ENCODE measurements at regions of chr4 and their contacts with region 1.

Region 1: DNA sequence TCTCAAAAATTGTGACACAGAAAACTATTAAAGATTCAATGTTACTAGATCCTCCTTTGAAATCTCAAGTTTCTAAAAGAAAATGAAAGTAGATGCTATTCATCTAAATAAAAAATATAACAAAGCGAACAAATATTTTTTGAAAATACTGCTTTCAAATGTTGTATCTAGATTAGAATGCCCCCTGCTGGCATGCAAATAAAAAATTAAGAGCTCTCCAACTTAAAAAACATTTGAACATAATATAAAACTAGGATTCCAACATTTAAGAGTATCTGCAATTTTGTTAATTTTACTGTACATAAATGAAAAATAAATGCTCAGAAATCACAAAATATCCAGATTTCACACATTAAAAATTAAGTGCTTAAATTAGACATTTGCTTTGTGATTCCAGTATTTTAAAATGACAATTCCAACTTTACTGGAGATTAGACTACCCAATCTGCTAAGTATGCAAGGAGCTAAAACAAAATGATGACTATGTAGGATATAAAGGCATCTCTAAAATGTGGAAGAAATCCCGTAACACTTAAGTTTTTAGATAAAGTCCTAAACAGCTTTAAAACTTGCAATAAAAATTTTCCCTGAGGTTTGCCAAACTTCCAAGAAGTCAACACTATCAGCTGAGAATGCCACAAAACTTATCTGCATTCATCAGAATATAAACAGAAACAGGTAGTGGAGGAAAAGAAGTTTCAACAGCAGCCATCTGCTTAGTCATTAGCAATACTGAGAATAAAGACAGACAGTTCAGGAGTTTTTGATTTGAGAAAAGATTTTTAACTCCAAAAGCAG is 32.7 kb downstream of the DHX15 start:
- DNase-seq: no peak
- H3K4me3 Mint-ChIP-seq: no peak overlapping the region
- H3K27ac Mint-ChIP-seq: no peak overlapping the region
- H3K4me1 Mint-ChIP-seq: peaks cover 56% of the 10 kb centered on the region
- H3K27me3 Mint-ChIP-seq: no peaks in the 10 kb centered on the region

Region 2: DNA sequence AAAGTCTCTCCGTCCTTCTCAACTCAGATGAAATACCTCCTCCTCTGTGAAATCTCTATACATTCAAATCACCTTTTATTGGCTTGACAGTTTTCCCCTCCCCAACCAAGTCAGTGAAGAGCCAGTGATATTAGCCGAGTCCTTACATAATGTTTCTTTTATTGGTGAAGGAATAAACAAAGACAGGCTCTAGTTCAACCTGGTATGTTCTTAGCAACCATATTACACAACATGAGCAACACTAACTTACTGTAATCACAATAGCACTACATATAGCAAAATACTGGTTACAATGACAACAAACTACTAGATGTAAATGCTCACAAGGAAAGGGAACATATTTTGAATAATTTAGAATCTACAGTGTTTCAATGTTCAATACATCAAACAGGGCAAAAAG is 12.8 kb after region 1 on chr4:
- CTCF ChIA-PET with region 1: interaction called, 15 read pairs
- POLR2A ChIA-PET with region 1: no interaction called
- intact Hi-C with region 1: no loop called
- DNase-seq: no peak
- H3K4me3 Mint-ChIP-seq: no peak overlapping the region
- H3K27ac Mint-ChIP-seq: no peak overlapping the region
- H3K4me1 Mint-ChIP-seq: peaks cover 69% of the 10 kb centered on the region
- H3K27me3 Mint-ChIP-seq: no peaks in the 10 kb centered on the region

Region 3: GRCh38 chr4:24937176-24937916 is 385.7 kb after region 1 on chr4:
- CTCF ChIA-PET with region 1: no interaction called
- POLR2A ChIA-PET with region 1: no interaction called
- intact Hi-C with region 1: no loop called
- DNase-seq: no peak
- H3K4me3 Mint-ChIP-seq: no peak overlapping the region
- H3K27ac Mint-ChIP-seq: no peak overlapping the region
- H3K4me1 Mint-ChIP-seq: no peaks in the 10 kb centered on the region
- H3K27me3 Mint-ChIP-seq: peaks cover 4% of the 10 kb centered on the region

Measured in activated CD4-positive, alpha-beta memory T cell treated with anti-CD3 and anti-CD28 coated beads for 36 hours (primary cell).